MCF 10A (cell line): ENCODE measurements at regions of chrX and their contacts with region 1.

Region 1: DNA sequence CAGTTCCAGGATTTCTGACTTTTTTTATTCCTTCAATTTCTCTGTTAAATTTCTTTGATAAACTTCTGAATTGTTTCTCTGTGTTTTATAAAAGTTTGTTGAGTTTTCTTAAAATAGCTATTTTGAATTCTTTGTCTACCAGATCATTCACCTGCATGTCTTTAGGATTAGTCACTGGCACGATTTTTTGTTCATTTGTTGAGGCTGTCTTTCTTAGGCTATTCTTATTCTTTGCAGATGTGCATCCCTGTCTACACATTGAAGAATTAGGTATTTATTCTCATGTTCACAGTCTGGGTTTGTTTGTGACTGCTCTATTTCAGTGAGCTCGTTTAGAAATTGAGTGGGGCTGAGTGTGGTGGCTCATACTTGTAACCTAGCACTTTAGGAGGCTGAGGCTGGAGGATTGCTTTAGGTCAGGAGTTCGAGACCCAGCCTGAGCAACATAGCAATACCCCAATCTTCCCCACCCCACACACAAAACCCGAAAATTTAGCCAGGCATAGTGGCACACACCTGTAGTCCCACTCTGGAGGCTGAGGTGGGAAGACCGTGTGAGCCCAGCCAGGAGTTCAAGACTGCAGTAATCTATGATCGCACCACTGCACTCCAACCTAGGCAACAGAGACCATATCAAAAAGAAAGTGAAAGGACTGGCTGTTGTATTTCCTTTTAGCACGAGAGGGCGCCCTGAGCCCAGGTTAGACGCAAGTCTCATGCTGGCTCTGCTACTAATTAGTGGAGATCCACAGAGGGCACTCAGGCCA is 42.0 kb downstream of the F8 start:
- DNase-seq: peak; percentile 86
- H3K4me3 Mint-ChIP-seq: peak overlapping the region; percentile 71
- H3K27ac Mint-ChIP-seq: peak overlapping the region; percentile 86
- H3K4me1 Mint-ChIP-seq: peaks cover 18% of the 10 kb centered on the region
- H3K27me3 Mint-ChIP-seq: no peaks in the 10 kb centered on the region
- CTCF ChIP-seq: peak; percentile 84

Region 2: DNA sequence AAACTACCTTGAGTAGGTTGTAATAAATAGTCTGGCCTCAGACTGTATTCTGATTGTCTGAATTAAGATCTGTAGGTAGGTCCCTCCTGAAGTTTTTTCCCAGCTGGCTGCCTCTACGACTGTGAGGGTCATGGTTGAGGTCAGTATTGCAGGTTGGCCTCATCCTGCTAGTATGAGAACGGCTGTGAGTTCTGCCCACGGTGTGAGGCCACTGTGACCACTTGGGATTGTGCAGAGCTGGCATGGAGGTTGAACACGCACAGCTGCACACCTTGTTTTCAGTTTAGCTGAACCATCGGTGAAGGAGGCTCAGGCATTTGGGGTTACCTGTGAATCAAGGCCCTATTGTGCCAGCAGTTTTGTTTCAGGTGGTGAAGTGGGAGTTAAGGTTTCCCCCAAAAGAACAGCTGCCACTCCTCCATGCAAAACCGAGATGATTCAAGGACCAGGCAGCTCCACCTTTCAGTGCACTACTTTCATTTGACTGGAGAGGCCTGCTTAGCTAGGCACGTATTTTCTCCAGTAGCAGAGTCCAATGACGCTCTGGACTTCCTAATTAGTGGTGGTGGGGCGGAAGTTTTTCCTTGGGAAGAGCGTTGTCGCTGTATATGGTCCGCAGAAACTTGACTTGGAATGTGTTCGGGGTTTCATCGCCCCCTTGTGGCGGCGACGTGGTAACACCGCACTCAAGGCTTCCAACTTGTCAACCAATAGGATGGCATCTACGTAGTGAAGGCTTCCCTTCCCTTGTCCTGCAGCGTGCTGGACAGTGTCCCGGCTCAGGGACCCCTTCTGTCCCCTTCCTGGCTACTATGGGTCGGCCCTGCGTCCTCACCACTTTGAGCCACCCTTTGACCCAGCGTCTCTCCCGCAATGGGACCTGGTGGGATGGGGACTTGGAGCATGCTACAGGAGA is 76.6 kb after region 1 on chrX:
- CTCF ChIA-PET with region 1: interaction called, 37 read pairs
- POLR2A ChIA-PET with region 1: interaction called, 3 read pairs
- intact Hi-C with region 1: loop called (anchors 1 kb)
- DNase-seq: peak; percentile 70
- H3K4me3 Mint-ChIP-seq: no peak overlapping the region
- H3K27ac Mint-ChIP-seq: no peak overlapping the region
- H3K4me1 Mint-ChIP-seq: no peaks in the 10 kb centered on the region
- H3K27me3 Mint-ChIP-seq: peaks cover 29% of the 10 kb centered on the region
- CTCF ChIP-seq: peak; percentile 68

Region 3: GRCh38 chrX:155086202-155086840 is 105.8 kb after region 1 on chrX:
- CTCF ChIA-PET with region 1: interaction called, 21 read pairs
- POLR2A ChIA-PET with region 1: no interaction called
- intact Hi-C with region 1: loop called (anchors 1 kb)
- DNase-seq: peak; percentile 62
- H3K4me3 Mint-ChIP-seq: no peak overlapping the region
- H3K27ac Mint-ChIP-seq: no peak overlapping the region
- H3K4me1 Mint-ChIP-seq: no peaks in the 10 kb centered on the region
- H3K27me3 Mint-ChIP-seq: peaks cover 40% of the 10 kb centered on the region
- CTCF ChIP-seq: peak; percentile 61

Region 4: GRCh38 chrX:155179346-155179986 is 199.0 kb after region 1 on chrX:
- CTCF ChIA-PET with region 1: no interaction called
- POLR2A ChIA-PET with region 1: no interaction called
- intact Hi-C with region 1: loop called (anchors 2 kb)
- DNase-seq: peak; percentile 15
- H3K4me3 Mint-ChIP-seq: no peak overlapping the region
- H3K27ac Mint-ChIP-seq: no peak overlapping the region
- H3K4me1 Mint-ChIP-seq: no peaks in the 10 kb centered on the region
- H3K27me3 Mint-ChIP-seq: no peaks in the 10 kb centered on the region
- CTCF ChIP-seq: no peak

Region 5: GRCh38 chrX:155718972-155719586 is 738.6 kb after region 1 on chrX:
- CTCF ChIA-PET with region 1: no interaction called
- POLR2A ChIA-PET with region 1: no interaction called
- intact Hi-C with region 1: no loop called
- DNase-seq: peak; percentile 17
- H3K4me3 Mint-ChIP-seq: no peak overlapping the region
- H3K27ac Mint-ChIP-seq: no peak overlapping the region
- H3K4me1 Mint-ChIP-seq: no peaks in the 10 kb centered on the region
- H3K27me3 Mint-ChIP-seq: no peaks in the 10 kb centered on the region
- CTCF ChIP-seq: no peak